Endothelial cell of umbilical vein (primary cell): ENCODE measurements at regions of chr6 and their contacts with region 1.

Region 1: DNA sequence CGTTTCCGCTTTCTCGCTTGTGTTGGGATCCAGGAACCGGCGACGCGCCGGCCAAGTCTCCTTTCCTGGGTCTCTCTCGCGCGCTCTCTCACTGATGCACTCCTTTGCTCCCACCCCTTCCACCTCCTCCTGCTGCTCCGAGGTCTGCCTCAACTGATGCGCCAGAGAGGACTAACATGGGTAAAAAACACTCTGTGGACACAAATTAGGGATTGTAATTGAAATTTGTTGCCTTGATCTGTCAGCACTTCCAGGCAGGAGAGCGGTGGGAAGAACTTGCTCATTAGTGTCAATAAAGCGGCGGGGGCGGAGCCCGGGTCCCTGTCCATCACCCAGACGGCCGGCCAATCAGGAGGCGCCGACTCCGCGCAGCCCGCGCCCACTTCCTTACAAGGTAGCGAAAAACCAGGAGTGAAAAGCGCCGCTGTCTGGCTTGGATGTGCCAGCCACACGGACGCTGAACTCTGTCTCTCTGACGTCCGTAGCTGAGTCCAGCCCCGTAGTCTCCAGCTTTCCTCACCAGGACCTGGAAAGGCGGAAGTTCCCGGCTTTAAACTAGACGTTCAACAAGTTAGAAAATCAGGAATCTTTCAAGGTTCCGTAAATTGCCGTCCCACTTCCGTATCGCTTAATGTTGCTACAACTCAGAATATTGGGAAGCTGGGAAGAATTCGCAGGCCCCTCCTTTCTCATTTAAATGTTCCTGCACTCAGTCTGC is at the start of gene TBX18:
- DNase-seq: peak; percentile 99
- H3K4me3 ChIP-seq: peak within 1 kb of the TSS; percentile 63 to 95 (median 68)
- H3K27ac ChIP-seq: peak within 1 kb of the TSS; percentile 79
- H3K4me1 ChIP-seq: peaks cover 34% of the 10 kb centered on the region
- H3K27me3 ChIP-seq: peaks cover 27 to 38% of the 10 kb centered on the region in 2 experiments
- CTCF ChIP-seq: peak in 1 of 2 donors; percentile 25
- POLR2A ChIP-seq: peak; percentile 88
- total RNA-seq, gene TBX18: 28.4 and 35.3 TPM in 2 replicates

Region 2: DNA sequence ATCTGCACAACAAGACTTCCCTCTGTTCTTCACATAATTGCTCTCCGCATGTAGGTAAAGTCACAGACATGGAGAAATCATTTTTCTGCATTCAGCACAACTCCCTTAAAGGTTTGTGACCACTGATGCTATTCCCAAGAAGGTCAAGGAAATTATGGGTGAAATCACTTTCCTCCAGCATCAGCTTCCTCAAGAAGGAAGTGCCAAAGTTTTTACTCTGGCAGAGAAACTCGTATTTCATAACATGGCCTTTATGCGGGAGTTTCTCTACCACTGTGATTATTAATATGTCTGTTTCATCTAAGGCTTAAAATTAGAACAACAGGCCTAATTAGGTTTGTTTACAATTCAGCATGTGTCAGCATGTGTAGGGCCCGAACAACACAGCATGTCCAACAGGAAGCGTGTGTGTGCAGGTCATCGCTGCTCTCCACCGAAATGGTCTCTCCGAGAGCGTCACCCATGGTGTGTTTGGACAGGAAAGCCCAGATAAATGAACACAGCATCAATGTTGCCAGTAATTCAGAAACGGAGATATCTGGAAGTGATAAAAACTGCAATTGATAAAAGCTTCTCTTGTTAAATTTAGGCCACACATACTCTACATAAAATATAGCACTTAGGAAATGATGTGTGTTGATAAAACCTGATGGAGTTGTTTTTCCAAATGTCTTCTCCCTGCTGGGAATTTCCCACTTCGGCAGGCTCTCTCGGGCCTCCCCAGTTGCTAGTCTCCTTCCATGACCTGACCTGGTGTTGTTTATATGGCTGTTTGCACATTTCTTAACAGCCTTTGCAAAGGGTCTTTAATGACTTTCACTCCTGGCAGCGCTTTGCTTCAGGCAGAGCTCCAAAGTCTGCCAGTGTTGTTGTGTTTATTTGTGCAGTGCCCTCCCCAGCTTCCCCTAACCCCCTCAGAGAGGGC is 272.0 kb before region 1 on chr6:
- CTCF ChIA-PET with region 1: interaction called, 17 read pairs
- POLR2A ChIA-PET with region 1: interaction called, 3 read pairs
- dilution Hi-C with region 1: no loop called
- intact Hi-C with region 1: loop called (anchors 1 kb)
- DNase-seq: peak; percentile 91
- H3K4me3 ChIP-seq: no peak overlapping the region
- H3K27ac ChIP-seq: peak overlapping the region; percentile 87
- H3K4me1 ChIP-seq: peaks cover 28% of the 10 kb centered on the region
- H3K27me3 ChIP-seq: no peaks in the 10 kb centered on the region
- CTCF ChIP-seq: no peak
- POLR2A ChIP-seq: peak; percentile 50

Region 3: DNA sequence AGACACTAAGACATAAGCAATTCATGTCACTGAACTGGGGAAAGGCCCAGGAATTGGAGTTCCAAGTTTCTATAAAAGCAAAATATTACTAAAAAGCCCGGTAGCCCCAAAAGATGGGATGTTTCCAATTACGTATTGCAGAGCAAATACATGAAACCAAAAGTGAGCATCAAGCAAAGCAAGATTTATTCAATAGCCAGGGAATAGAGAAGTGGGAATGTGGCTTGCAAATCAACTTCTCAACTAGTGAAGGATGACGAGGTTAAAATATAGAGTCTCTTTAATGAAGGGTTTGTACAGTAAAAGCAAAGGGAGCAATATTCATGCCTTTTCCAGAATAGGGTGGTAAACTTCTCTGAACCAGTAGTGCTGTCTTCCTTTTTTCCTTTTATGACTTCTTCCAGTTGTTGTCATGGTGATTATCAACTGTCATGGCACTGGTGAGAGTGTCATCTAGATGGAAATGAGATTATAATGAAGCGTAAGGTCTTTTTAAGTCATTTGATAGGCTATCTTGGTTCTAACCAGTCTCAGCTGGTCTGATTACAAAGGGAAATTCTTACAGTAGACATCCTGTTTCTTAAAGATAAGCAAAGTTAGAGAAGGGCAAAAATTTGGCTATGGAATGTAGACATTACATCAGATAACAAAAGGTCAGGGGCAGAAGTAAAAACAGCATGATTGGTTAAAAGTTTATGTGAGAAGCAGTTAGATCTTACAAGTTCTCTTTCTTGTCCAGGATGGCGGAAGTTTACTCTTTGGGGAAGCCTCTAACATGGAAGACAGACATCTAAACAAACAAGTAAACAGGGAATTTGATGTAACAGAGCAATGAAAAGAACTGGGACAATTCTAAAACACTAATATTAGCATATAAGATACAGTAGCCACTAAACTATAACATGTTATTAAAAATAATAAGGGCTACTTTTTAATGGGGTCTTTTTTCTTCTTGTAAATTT is 97.0 kb before region 1 on chr6:
- CTCF ChIA-PET with region 1: no interaction called
- POLR2A ChIA-PET with region 1: no interaction called
- dilution Hi-C with region 1: no loop called
- intact Hi-C with region 1: loop called (anchors 5 kb)
- DNase-seq: peak; percentile 88
- H3K4me3 ChIP-seq: no peak overlapping the region
- H3K27ac ChIP-seq: peak overlapping the region; percentile 89
- H3K4me1 ChIP-seq: peaks cover 17% of the 10 kb centered on the region
- H3K27me3 ChIP-seq: no peaks in the 10 kb centered on the region
- CTCF ChIP-seq: no peak
- POLR2A ChIP-seq: no peak

Region 4: DNA sequence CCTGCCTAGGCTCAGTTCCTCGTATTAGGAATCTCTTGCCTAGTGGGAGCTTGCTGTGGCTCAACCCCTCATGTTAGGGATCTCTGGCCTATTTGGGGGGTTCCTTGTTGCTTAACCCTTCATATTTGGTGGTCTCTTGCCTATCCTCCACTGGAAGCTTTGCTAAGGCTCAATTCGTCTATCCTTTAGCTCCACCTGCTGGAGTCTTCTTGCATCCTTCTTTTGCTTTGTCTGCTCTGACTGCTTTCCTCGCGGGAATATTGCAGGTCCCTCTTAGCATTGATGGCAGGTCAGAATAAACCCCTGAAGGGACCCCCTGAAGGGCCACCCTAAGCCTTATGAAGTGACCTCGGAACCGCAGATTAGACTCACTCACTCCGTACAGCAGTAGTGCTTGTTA is 202.9 kb after region 1 on chr6:
- CTCF ChIA-PET with region 1: interaction called, 9 read pairs
- POLR2A ChIA-PET with region 1: no interaction called
- dilution Hi-C with region 1: no loop called
- intact Hi-C with region 1: loop called (anchors 1 kb)
- DNase-seq: peak; percentile 75
- H3K4me3 ChIP-seq: no peak overlapping the region
- H3K27ac ChIP-seq: no peak overlapping the region
- H3K4me1 ChIP-seq: no peaks in the 10 kb centered on the region
- H3K27me3 ChIP-seq: no peaks in the 10 kb centered on the region
- CTCF ChIP-seq: peak; percentile 52 to 62
- POLR2A ChIP-seq: no peak

Region 5: GRCh38 chr6:85323435-85324040 is 559.0 kb after region 1 on chr6:
- CTCF ChIA-PET with region 1: interaction called, 6 read pairs
- POLR2A ChIA-PET with region 1: no interaction called
- dilution Hi-C with region 1: no loop called
- intact Hi-C with region 1: loop called (anchors 2 kb)
- DNase-seq: peak; percentile 80
- H3K4me3 ChIP-seq: no peak overlapping the region
- H3K27ac ChIP-seq: no peak overlapping the region
- H3K4me1 ChIP-seq: no peaks in the 10 kb centered on the region
- H3K27me3 ChIP-seq: peaks cover 3 to 4% of the 10 kb centered on the region in 2 experiments
- CTCF ChIP-seq: peak; percentile 74 to 83
- POLR2A ChIP-seq: no peak

Region 6: DNA sequence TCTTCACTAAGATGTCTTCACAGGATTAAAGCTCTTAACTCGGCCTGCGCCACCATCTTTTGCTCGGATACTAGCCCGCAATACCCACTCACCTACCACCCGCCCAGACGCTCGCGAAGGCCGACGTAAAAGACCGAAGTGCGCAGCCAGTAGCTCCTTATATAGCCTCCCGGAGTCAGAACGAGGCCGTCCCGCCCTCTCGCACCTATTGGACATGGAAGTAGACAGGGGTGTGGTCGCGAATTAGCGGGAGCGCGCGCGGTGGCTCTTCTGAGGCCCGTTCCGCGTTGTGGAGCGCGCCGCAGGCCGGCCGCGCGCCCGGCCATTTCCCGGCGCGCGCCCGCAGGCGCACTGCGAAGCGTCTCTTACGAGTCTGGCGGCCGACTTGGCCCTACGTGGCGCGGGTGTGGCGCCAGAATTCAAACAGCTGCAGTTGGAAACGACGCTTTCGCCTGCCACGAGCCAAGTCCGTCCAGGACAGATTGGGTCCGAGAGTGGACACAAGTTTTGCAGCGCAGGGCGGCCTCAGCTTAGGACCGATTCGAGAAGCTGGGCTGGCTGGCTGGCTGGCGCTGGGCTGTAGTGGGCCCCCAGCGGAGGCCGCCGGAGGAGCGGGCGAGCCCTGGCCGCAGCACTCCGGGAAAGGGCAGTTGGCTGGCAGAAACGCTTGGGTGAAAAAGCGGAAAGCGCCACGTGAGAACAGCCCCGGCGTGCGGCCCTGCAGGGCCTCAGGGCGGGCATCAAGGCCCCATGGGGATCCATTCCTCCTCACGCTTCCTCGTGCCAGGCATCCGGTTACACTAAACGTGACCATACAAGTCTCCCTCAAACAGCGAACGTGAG is 914.3 kb after region 1 on chr6:
- CTCF ChIA-PET with region 1: no interaction called
- POLR2A ChIA-PET with region 1: no interaction called
- dilution Hi-C with region 1: no loop called
- intact Hi-C with region 1: loop called (anchors 10 kb)
- DNase-seq: peak; percentile 99
- H3K4me3 ChIP-seq: peak overlapping the region; percentile 87 to 99 (median 96)
- H3K27ac ChIP-seq: peak overlapping the region; percentile 72
- H3K4me1 ChIP-seq: peaks cover 29% of the 10 kb centered on the region
- H3K27me3 ChIP-seq: no peaks in the 10 kb centered on the region
- CTCF ChIP-seq: peak in 1 of 2 donors; percentile 9
- POLR2A ChIP-seq: peak; percentile 100